ENCODE measurements at regions of chr15 and their contacts with region 1.

Region 1: DNA sequence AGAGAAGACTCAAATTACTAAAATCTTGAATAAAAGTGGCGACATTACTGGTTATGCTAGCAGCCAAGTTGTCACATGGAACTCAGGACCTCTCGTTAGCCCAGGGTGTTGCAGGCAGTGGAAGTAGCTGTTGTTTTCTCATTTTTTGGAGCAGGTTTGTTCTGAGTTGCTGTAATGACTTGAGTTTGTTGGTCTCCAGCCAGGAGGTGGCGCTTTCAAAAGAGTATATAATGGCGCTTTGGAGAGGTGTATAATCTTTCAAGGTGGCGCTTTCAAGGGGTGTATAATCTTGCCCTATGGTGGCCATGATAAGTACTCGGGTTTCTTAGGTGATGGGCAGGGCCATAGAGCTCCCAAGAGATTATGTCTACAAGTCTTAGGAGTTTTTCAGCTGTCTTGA is 632.7 kb downstream of the NTRK3 start:
- DNase-seq: no peak
- H3K4me3 ChIP-seq: no peak overlapping the region
- H3K27ac ChIP-seq: no peak overlapping the region
- H3K4me1 ChIP-seq: peaks cover 0 to 2% (median 0%) of the 10 kb centered on the region in 3 donors
- H3K27me3 ChIP-seq: no peaks in the 10 kb centered on the region
- CTCF ChIP-seq: no peak

Region 2: GRCh38 chr15:87528820-87529219 is 95.0 kb before region 1 on chr15:
- intact Hi-C with region 1: no loop called
- DNase-seq: peak in 2 of 5 donors; percentile 39 to 58
- H3K4me3 ChIP-seq: no peak overlapping the region
- H3K27ac ChIP-seq: no peak overlapping the region
- H3K4me1 ChIP-seq: no peaks in the 10 kb centered on the region
- H3K27me3 ChIP-seq: no peaks in the 10 kb centered on the region
- CTCF ChIP-seq: no peak

Region 3: DNA sequence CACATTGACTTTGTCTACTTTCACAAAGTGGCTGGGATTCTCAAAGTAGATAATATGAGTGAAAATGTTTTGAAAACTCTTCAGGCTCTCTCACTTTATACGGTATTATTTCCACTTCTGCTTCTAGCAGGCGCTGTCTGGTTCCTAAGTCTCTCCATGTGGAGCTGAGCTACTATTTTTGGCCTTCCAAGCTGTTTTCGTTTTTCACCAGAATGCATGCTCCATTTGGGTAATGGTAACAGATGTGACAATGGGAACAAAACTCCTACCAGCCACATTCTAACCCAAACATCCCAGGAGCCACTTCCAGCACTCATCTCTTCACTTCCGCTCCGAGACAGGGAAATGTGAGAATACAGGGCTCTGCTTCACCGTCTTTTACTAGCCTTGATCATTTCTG is 46.0 kb after region 1 on chr15:
- intact Hi-C with region 1: loop called (anchors 5 kb)
- DNase-seq: no peak
- H3K4me3 ChIP-seq: no peak overlapping the region
- H3K27ac ChIP-seq: no peak overlapping the region
- H3K4me1 ChIP-seq: no peaks in the 10 kb centered on the region
- H3K27me3 ChIP-seq: no peaks in the 10 kb centered on the region
- CTCF ChIP-seq: no peak

Region 4: GRCh38 chr15:87850916-87851315 is 227.1 kb after region 1 on chr15:
- intact Hi-C with region 1: no loop called
- DNase-seq: no peak
- H3K4me3 ChIP-seq: no peak overlapping the region
- H3K27ac ChIP-seq: no peak overlapping the region
- H3K4me1 ChIP-seq: no peaks in the 10 kb centered on the region
- H3K27me3 ChIP-seq: no peaks in the 10 kb centered on the region
- CTCF ChIP-seq: no peak